HCT116 (cell line): ENCODE measurements at regions of chr4 and their contacts with region 1.

Region 1: GRCh38 chr4:97720869-97721432 is 422.3 kb downstream of the STPG2 start:
- DNase-seq: peak; percentile 54
- ATAC-seq: peak; percentile 71
- H3K4me3 ChIP-seq: no peak overlapping the region
- H3K27ac ChIP-seq: no peak overlapping the region
- H3K4me1 ChIP-seq: 0 out of 4 replicates have a peak, but pooled peaks cover 0 to 2% of the 10 kb centered on the region in 2 experiments
- H3K27me3 ChIP-seq: no peaks in the 10 kb centered on the region
- CTCF ChIP-seq: peak; percentile 28 to 46 (median 38); a peak in 4 of 6 replicates
- POLR2A ChIP-seq: no peak
- RAD21 ChIP-seq: peak; percentile 62

Region 2: DNA sequence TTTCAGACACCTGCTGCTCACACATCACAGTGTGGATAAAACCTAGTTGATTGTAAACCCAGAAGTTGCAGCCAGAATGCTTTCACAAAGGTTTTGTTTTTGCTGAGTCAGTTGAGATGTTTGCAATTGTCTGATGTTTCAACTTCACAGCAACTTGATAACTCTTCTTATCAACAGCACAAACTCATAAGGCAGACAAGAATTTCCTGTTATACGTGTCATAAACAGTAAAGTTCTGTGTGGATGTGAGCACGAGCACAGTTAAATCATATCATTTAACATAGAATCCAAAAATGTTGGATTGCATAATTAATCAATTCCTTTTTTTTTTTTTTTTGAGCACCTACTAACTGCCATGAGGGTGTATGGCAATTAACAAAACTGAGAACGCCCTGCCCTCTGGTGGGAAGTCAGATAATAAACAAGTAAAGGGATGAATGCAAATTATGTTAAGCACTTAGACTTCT is 1368.9 kb before region 1 on chr4:
- CTCF ChIA-PET with region 1: no interaction called
- POLR2A ChIA-PET with region 1: no interaction called
- RAD21 ChIA-PET with region 1: no interaction called
- intact Hi-C with region 1: loop called (anchors 5 kb)
- DNase-seq: peak; percentile 34
- ATAC-seq: peak; percentile 62; the same call in 1 of the 2 replicates
- H3K4me3 ChIP-seq: no peak overlapping the region
- H3K27ac ChIP-seq: no peak overlapping the region
- H3K4me1 ChIP-seq: no peaks in the 10 kb centered on the region
- H3K27me3 ChIP-seq: no peaks in the 10 kb centered on the region
- CTCF ChIP-seq: peak; percentile 32 to 67 (median 48); a peak in 4 of 6 replicates
- POLR2A ChIP-seq: no peak
- RAD21 ChIP-seq: peak; percentile 74

Region 3: GRCh38 chr4:96483308-96484030 is 1237.5 kb before region 1 on chr4:
- CTCF ChIA-PET with region 1: no interaction called
- POLR2A ChIA-PET with region 1: no interaction called
- RAD21 ChIA-PET with region 1: no interaction called
- intact Hi-C with region 1: loop called (anchors 10 kb)
- DNase-seq: peak; percentile 8
- ATAC-seq: no peak
- H3K4me3 ChIP-seq: no peak overlapping the region
- H3K27ac ChIP-seq: no peak overlapping the region
- H3K4me1 ChIP-seq: no peaks in the 10 kb centered on the region
- H3K27me3 ChIP-seq: no peaks in the 10 kb centered on the region
- CTCF ChIP-seq: peak in 2 of 3 experiments; percentile 13 to 18; a peak in 2 of 6 replicates
- POLR2A ChIP-seq: no peak
- RAD21 ChIP-seq: peak; percentile 49

Region 4: DNA sequence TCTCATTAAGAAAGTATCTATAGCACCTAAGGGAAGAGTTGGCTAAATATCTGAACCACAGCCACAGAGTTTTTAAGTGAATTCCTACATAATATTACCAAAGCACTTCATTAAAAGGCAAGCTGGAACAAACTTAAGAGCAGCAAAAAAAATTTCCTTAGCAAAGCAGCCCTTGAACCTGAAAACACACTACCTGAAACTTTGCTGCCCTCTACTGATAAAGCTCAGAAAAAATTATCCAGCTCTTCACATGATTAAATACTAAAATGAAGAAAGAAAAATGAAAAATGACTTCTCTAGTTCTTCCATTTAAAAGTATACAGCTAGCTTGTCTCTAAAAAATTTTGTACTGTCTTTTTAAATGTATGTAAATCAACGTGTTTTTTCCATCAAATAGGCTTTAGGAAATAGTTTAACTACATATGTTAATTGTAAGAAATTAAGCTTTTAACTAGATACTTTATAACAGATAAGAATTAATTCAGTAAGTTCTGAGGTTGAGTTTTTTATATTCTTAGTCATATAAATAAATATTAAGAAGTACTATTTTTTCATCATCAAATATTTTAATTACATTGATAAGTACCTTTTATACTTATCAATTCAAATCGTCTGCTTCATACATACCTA is 266.2 kb after region 1 on chr4:
- CTCF ChIA-PET with region 1: interaction called, 11 read pairs
- POLR2A ChIA-PET with region 1: no interaction called
- RAD21 ChIA-PET with region 1: interaction called in 1 of 2 experiments, 3 read pairs
- intact Hi-C with region 1: loop called (anchors 10 kb)
- DNase-seq: peak; percentile 44
- ATAC-seq: 0 out of 2 replicates have a peak, but pooled peaks have one; percentile 49
- H3K4me3 ChIP-seq: no peak overlapping the region
- H3K27ac ChIP-seq: no peak overlapping the region
- H3K4me1 ChIP-seq: no peaks in the 10 kb centered on the region
- H3K27me3 ChIP-seq: no peaks in the 10 kb centered on the region
- CTCF ChIP-seq: peak; percentile 36 to 74 (median 59); a peak in 4 of 6 replicates
- POLR2A ChIP-seq: no peak
- RAD21 ChIP-seq: peak; percentile 79